H1 (cell line): ENCODE measurements at regions of chr4 and their contacts with region 1.

Region 1: GRCh38 chr4:128809477-128810330 is at the start of gene JADE1:
- DNase-seq: peak; percentile 82 to 92
- H3K4me3 ChIP-seq: peak within 1 kb of the TSS; percentile 92 to 99 (median 97)
- H3K27ac ChIP-seq: peak within 1 kb of the TSS; percentile 97
- H3K4me1 ChIP-seq: peaks cover 2 to 10% (median 4%) of the 10 kb centered on the region in 4 experiments; a peak in 5 of 7 replicates
- H3K27me3 ChIP-seq: no peaks in the 10 kb centered on the region
- CTCF ChIP-seq: peak; percentile 62 to 86 (median 72)
- EP300 ChIP-seq: peak in 1 of 2 experiments; percentile 79; a peak in 1 of 3 replicates
- POLR2A ChIP-seq: peak; percentile 71 to 87
- RAD21 ChIP-seq: peak; percentile 85 to 87
- total RNA-seq, gene JADE1: 213 and 216 TPM in 2 replicates

Region 2: GRCh38 chr4:128565565-128566186 is 244.0 kb before region 1 on chr4:
- CTCF ChIA-PET with region 1: interaction called, 8 read pairs
- POLR2A ChIA-PET with region 1: interaction called, 11 read pairs
- DNase-seq: peak; percentile 53 to 80
- H3K4me3 ChIP-seq: no peak overlapping the region
- H3K27ac ChIP-seq: no peak overlapping the region
- H3K4me1 ChIP-seq: peaks cover 0 to 5% (median 4%) of the 10 kb centered on the region in 4 experiments; a peak in 4 of 7 replicates
- H3K27me3 ChIP-seq: no peaks in the 10 kb centered on the region
- CTCF ChIP-seq: peak; percentile 87 to 94 (median 92)
- EP300 ChIP-seq: no peak
- POLR2A ChIP-seq: no peak
- RAD21 ChIP-seq: peak; percentile 98

Region 3: DNA sequence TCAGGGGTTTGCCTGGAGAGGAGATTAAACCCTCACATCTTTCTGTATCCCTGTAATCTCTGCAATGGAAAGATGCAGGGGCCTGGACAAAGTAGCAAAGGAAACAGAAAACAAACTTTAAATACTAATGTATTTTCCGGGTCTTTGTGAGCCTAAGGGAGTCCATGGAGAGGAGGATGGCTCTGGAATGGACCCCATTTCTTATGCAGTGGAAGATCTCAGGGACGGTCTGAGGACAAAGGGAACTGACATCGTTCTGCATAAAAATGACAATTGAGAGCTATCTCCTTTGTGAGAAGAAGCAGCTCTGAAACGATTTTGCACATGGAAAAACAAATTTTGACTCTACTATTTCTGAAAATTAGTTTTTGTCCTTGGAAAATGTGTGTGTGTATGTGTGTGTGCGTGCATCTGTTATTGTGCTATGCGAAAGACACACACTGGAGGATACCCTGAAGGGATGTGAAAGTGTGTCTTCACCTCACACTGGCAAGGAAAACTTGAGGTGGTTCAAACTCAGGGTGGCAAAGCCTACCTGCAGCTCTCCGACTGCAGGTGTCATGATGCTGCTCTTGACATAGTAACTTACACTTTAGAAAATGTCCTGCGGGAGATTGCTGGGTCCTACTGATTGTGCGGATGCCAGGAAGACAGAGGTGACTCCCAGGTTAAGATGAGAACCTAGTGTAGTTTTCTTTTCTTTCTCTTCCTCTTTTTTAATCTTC is 126.6 kb before region 1 on chr4:
- CTCF ChIA-PET with region 1: no interaction called
- POLR2A ChIA-PET with region 1: interaction called, 15 read pairs
- DNase-seq: peak; percentile 52 to 57
- H3K4me3 ChIP-seq: peak overlapping the region in 3 of 4 experiments; percentile 2 to 37 (median 9); a peak in 4 of 8 replicates
- H3K27ac ChIP-seq: peak overlapping the region; percentile 80
- H3K4me1 ChIP-seq: peaks cover 3 to 19% (median 14%) of the 10 kb centered on the region in 4 experiments; a peak in 5 of 7 replicates
- H3K27me3 ChIP-seq: no peaks in the 10 kb centered on the region
- CTCF ChIP-seq: 0 out of 4 replicates have a peak, but pooled peaks of 1 of the 3 experiments have one; percentile 14
- EP300 ChIP-seq: no peak
- POLR2A ChIP-seq: peak in 1 of 2 experiments; percentile 46; a peak in 1 of 3 replicates
- RAD21 ChIP-seq: peak; percentile 16 to 28; a peak in 2 of 4 replicates

Region 4: GRCh38 chr4:128823025-128823661 is 13.4 kb after region 1 on chr4:
- CTCF ChIA-PET with region 1: interaction called, 8 read pairs
- POLR2A ChIA-PET with region 1: interaction called, 89 read pairs
- DNase-seq: no peak
- H3K4me3 ChIP-seq: no peak overlapping the region
- H3K27ac ChIP-seq: no peak overlapping the region
- H3K4me1 ChIP-seq: peaks cover 6 to 37% (median 24%) of the 10 kb centered on the region in 4 experiments
- H3K27me3 ChIP-seq: no peaks in the 10 kb centered on the region
- CTCF ChIP-seq: no peak
- EP300 ChIP-seq: no peak
- POLR2A ChIP-seq: no peak
- RAD21 ChIP-seq: no peak

Region 5: GRCh38 chr4:128831531-128832242 is 22.0 kb after region 1 on chr4:
- CTCF ChIA-PET with region 1: interaction called, 3 read pairs
- POLR2A ChIA-PET with region 1: interaction called, 89 read pairs
- DNase-seq: no peak
- H3K4me3 ChIP-seq: peak overlapping the region in 1 of 4 experiments; percentile 35; a peak in 2 of 8 replicates
- H3K27ac ChIP-seq: 0 out of 2 replicates have a peak overlapping the region, but pooled peaks have one; percentile 20
- H3K4me1 ChIP-seq: peaks cover 15 to 50% (median 38%) of the 10 kb centered on the region in 4 experiments
- H3K27me3 ChIP-seq: no peaks in the 10 kb centered on the region
- CTCF ChIP-seq: no peak
- EP300 ChIP-seq: no peak
- POLR2A ChIP-seq: no peak
- RAD21 ChIP-seq: no peak

Region 6: DNA sequence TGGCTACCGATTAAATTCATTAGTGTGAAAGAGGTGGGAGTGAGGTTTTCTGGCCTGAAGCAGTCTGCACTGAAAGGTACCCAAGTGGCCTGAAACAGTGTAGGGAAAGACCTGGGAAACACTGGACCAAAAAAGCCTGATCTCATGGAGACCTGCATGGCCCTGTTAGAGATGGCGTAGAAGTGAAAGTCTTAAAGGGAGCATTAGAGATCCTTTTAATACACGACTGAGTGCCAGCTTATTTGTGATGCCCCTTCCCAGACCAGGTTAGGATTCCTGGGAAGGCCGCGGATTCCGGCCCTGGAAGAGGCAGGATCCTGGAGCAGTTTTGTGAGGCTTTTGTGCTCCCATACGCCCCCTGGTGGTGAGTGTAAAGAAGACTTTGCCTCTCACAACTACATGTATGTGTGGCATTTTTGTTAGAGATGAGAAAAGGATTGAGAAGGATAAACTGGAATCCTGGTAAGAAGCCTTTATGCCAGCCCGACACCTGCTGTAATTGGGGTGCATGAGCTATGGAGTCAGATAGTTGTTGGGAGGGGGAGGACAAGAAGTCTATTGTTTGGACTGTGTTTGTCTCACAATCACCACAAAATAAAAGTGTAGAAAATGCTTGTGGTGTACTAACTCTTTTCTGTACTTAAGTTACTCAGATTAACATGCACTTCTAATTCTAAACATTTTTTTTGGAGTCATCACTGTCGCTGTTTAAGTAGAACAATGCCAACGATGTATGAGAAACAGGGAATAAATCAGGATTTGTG is 53.8 kb after region 1 on chr4:
- CTCF ChIA-PET with region 1: interaction called, 4 read pairs
- POLR2A ChIA-PET with region 1: interaction called, 23 read pairs
- DNase-seq: peak; percentile 57 to 91
- H3K4me3 ChIP-seq: no peak overlapping the region
- H3K27ac ChIP-seq: no peak overlapping the region
- H3K4me1 ChIP-seq: peaks cover 0 to 9% (median 5%) of the 10 kb centered on the region in 4 experiments; a peak in 6 of 7 replicates
- H3K27me3 ChIP-seq: no peaks in the 10 kb centered on the region
- CTCF ChIP-seq: peak; percentile 34 to 86 (median 65)
- EP300 ChIP-seq: no peak
- POLR2A ChIP-seq: peak in 1 of 2 experiments; percentile 66; a peak in 1 of 3 replicates
- RAD21 ChIP-seq: peak; percentile 65 to 70

Region 7: DNA sequence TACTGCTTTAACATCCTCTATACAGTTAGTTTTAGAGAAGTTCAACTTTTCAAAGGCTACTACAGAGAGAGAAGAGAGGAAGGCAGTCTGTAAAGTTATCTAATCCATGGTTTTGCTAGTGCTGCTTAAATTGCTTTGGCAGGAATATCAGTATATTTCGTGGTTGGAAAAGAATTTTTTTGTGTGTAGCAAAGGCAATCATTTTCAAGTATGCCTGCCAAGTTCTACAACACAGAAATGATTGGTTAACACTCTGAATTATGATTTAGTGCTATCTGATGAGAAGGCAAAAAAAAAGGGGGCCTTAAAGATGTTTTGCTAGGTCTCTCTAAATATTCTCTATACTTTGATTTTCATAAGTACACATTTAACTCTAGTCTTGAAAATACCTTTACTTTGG is 132.9 kb after region 1 on chr4:
- CTCF ChIA-PET with region 1: no interaction called
- POLR2A ChIA-PET with region 1: no interaction called
- DNase-seq: no peak
- H3K4me3 ChIP-seq: no peak overlapping the region
- H3K27ac ChIP-seq: no peak overlapping the region
- H3K4me1 ChIP-seq: no peaks in the 10 kb centered on the region
- H3K27me3 ChIP-seq: no peaks in the 10 kb centered on the region
- CTCF ChIP-seq: no peak
- EP300 ChIP-seq: no peak
- POLR2A ChIP-seq: no peak
- RAD21 ChIP-seq: no peak